Lower leg skin (tissue), 4 donors: ENCODE measurements at regions of chr1 and their contacts with region 1.

Region 1: DNA sequence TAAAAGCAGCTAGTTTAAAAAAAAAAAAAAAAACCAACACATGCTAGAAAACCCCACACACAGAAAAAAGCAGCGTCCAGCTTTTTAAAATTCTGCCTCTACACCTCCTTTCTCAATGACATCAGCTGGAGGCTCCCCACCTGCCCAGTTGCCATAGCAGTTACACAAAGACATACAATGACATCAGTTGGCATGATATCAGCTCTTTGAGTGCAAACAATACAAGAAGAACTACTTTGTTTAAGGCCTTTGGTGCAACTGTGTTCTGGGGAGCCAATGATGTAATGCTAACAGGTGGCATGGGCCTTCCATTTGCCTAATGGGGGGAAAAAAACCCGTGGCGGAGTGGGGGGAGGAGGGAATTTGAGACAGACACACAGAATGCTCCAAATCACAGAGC is 32.9 kb downstream of the DUSP10 start:
- DNase-seq: no peak
- H3K4me3 ChIP-seq: no peak overlapping the region
- CTCF ChIP-seq: no peak
- POLR2A ChIP-seq: no peak

Region 2: DNA sequence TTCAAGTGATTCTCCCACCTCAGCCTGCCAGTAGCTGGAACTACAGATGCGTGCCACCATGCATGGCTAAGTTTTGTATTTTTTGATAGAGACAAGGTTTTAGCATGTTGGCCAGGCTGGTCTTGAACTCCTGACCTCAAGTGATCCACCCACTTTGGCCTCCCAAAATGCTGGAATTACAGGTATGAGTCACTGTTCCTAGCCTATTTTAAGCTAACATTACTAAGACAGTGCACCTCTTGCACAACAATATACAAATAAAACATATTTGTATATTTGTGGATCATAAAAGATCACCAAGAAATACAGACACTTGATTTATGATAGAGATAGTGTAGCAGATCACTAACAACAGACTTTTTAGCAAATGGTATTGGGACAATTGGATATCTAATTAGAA is 106.1 kb before region 1 on chr1:
- intact Hi-C with region 1: loop called (anchors 10 kb)
- DNase-seq: no peak
- H3K4me3 ChIP-seq: no peak overlapping the region
- CTCF ChIP-seq: no peak
- POLR2A ChIP-seq: no peak